ENCODE measurements at regions of chr2 and their contacts with region 1.

Region 1: DNA sequence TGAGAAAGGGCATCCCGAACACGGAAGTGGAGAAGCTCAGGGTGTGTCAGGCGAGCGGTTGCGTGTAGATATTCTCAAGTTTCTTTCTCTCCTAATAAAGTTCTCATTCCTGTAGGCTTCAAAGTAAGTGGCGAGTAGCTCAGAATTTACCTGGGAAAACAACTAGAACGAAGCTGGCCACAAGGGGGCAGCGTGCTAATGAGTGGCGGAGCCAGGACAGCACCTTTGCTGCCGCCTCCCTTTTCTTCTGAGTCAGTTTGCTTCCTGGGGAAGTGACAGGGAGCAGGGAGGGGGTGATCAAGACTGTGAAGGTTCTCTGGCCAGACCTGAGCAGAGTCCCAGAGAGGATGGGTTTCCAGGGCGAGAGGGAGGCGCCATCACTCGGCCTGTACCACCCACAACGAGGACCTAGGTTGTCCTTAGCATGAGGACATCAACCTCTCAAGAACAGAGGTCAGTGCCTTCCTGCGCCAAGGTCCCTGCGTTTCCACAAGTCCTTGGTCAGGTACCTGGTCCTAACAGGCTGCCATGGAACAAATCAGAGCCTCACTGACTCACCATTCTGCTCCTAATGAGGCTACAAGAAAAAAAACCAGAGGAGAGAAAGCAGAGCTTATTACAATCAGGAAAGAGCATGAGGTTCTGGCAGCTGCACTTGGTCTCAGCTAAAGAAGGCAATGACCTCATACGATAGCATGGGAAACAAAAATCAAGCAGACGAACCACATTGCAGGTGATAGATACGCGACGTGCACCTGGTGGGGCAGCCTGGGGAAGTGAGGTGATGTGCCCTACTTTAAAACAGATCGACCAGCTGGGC is 98.6 kb downstream of the PLB1 start:
- DNase-seq: peak; percentile 57 to 92 (median 81)
- ATAC-seq: peak; percentile 81 to 88 (median 84)
- H3K4me3 ChIP-seq: no peak overlapping the region
- H3K4me3 Mint-ChIP-seq: peak overlapping the region; percentile 53 to 73 (median 53)
- H3K27ac ChIP-seq: peak overlapping the region; percentile 76
- H3K27ac Mint-ChIP-seq: peak overlapping the region; percentile 89
- H3K4me1 ChIP-seq: peaks cover 4 to 10% of the 10 kb centered on the region in 2 experiments
- H3K4me1 Mint-ChIP-seq: peaks cover 17 to 20% (median 19%) of the 10 kb centered on the region in 3 donors
- H3K27me3 ChIP-seq: peaks cover 0 to 9% of the 10 kb centered on the region in 2 experiments
- H3K27me3 Mint-ChIP-seq: peaks cover 4 to 8% of the 10 kb centered on the region in 2 donors

Region 2: DNA sequence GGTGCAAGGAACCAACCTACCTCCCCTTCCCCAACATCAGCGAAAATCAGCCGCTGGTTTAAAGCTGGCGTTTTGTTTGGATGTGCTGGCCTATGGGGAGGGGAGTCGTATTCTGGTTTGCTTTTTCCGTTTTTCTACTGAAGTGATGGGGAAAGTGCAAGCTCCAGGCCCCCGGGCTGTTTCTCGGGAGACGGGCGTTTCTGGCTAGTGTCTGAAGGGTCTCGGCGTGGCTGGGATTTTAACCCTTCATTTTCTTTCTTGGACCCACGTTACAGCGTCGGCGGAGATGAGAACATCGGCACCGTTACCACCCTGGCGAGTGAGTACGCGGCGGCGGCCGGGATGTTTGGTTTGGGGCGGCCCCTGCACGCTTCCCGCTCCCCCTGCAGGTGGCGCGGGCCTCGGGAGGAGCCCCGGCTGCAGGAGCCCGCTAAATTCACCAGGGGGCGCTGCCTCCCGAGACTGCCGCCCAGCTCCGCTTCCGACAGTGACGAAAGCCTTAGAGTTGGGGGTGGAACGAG is 27.9 kb before region 1 on chr2:
- CTCF ChIA-PET with region 1: interaction called in 1 of 2 experiments, 12 read pairs
- POLR2A ChIA-PET with region 1: no interaction called
- DNase-seq: peak; percentile 70 to 95 (median 87)
- ATAC-seq: peak; percentile 95 to 99 (median 96)
- H3K4me3 ChIP-seq: peak overlapping the region; percentile 67 to 90
- H3K4me3 Mint-ChIP-seq: peak overlapping the region; percentile 86 to 89 (median 87)
- H3K27ac ChIP-seq: no peak overlapping the region
- H3K27ac Mint-ChIP-seq: peak overlapping the region; percentile 67 to 89
- H3K4me1 ChIP-seq: peaks cover 8 to 18% of the 10 kb centered on the region in 2 experiments
- H3K4me1 Mint-ChIP-seq: peaks cover 9 to 19% (median 16%) of the 10 kb centered on the region in 3 donors
- H3K27me3 ChIP-seq: peaks cover 0 to 3% of the 10 kb centered on the region in 2 experiments
- H3K27me3 Mint-ChIP-seq: no peaks in the 10 kb centered on the region

Region 3: DNA sequence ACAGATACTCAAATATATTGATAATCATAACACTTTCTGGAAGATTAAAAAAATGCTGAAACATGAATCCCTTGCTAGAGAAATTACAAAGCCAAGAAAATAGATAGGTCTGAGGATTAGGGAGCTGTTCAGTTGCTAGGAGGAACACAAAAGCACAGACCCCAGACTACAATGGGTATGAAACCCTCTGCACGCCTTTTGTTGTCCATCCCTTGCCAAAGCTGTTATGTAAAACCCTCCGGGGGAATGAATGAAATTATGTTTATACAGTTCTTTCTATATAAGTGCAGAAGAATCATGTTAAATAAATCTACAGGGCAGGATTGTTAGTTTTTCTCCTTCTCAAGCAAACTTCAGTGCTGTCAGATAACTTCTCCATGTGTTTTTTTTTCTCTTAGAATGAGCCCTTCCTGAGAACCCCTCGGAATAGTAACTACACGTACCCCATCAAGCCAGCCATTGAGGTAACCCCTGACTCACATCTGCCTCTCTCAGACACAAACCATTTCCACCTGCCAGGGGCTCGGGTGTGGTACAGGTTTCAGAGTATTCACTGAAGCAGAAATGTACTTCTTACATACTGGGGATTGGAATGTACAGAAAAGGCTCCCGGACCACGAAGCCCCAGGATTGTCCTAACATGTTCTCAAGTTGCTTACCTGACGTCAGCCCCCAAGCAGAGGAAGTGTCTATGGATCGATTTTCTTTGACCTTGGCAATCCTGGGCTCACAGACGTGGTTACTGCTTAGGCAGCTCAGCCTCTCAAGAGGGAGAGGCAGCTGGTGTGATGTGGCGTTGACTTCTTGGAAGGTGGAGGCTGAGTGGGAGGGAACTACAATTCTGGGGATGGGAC is 19.4 kb after region 1 on chr2:
- CTCF ChIA-PET with region 1: interaction called, 9 to 30 read pairs
- POLR2A ChIA-PET with region 1: interaction called, 6 to 14 read pairs
- DNase-seq: peak in 14 of 35 experiments; percentile 11 to 50 (median 23)
- ATAC-seq: peak; percentile 40 to 49 (median 46)
- H3K4me3 ChIP-seq: no peak overlapping the region
- H3K4me3 Mint-ChIP-seq: no peak overlapping the region
- H3K27ac ChIP-seq: peak overlapping the region; percentile 71
- H3K27ac Mint-ChIP-seq: no peak overlapping the region
- H3K4me1 ChIP-seq: peaks cover 53 to 54% of the 10 kb centered on the region in 2 experiments
- H3K4me1 Mint-ChIP-seq: peaks cover 28 to 47% (median 42%) of the 10 kb centered on the region in 3 donors
- H3K27me3 ChIP-seq: no peaks in the 10 kb centered on the region
- H3K27me3 Mint-ChIP-seq: no peaks in the 10 kb centered on the region

Region 4: DNA sequence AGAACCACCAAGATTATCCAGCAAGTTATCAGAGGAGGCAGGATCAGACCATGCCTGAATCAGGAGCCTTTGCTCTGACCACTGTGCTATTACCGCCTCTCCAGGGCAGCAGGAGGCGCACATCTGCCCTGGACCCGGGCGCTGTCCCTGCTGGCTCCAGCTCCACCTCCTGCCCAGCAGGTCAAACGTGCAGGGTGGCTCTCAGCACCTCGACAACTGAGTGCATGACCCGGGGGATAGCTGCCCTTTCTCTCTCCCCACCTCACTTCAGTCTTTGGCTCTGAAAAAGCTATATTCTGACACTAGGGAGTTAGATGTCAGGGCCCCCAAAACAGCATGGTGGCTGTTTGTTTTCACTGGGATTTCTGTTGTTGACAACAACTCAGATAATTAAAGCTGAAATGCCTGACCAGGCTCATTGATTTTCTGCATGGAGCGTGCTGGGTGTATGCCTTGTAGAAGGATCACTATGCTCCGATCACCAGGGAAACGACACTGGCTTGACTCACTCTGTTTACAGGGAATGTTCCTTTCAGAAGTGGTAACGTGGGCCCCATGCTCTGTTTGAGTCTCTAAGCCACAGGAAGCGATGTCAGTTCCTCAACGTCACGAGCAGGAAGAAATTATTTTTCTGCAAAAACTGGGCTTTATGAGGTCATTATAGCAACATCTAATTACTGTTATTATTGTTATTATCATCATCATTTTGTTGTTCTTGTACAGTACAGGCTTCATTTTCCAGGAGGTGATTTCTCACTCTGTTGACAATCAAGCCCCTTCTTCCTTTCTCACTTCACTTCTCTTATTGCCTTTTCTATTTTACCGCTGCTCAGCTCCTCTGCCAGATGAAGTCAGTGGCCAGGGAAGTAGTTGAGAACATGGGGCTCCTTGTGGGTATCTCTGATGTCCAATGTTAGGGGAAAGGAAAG is 26.9 kb after region 1 on chr2:
- CTCF ChIA-PET with region 1: interaction called, 9 to 62 read pairs
- POLR2A ChIA-PET with region 1: interaction called, 5 to 14 read pairs
- DNase-seq: peak; percentile 40 to 94 (median 82)
- ATAC-seq: peak; percentile 89 to 92 (median 91)
- H3K4me3 ChIP-seq: peak overlapping the region; percentile 22 to 32
- H3K4me3 Mint-ChIP-seq: peak overlapping the region; percentile 66 to 83 (median 72)
- H3K27ac ChIP-seq: peak overlapping the region; percentile 99
- H3K27ac Mint-ChIP-seq: peak overlapping the region; percentile 98 to 99
- H3K4me1 ChIP-seq: peaks cover 63 to 87% of the 10 kb centered on the region in 2 experiments
- H3K4me1 Mint-ChIP-seq: peaks cover 25 to 92% (median 89%) of the 10 kb centered on the region in 3 donors
- H3K27me3 ChIP-seq: no peaks in the 10 kb centered on the region
- H3K27me3 Mint-ChIP-seq: no peaks in the 10 kb centered on the region

Region 5: DNA sequence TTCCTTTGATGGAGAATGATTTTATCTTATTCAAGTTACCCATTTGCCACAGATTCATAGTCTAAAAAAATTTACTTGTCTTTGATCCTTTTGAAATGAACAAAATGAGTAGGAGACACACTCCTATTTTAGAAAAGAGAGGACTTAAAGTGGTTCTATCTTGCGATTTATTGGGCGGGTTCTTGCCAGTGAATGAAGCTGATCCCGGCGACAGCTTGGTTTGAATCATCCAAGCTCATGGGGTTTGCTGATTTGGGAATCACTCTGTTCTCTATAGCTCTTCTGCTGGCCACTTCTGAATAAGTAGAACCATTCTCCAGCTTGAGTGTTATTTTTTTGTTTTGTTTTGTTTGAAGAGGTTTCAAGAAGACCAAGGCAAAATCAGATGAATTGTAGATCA is 131.7 kb after region 1 on chr2:
- CTCF ChIA-PET with region 1: interaction called in 1 of 2 experiments, 12 read pairs
- POLR2A ChIA-PET with region 1: no interaction called
- DNase-seq: no peak
- ATAC-seq: no peak
- H3K4me3 ChIP-seq: no peak overlapping the region
- H3K4me3 Mint-ChIP-seq: no peak overlapping the region
- H3K27ac ChIP-seq: no peak overlapping the region
- H3K27ac Mint-ChIP-seq: no peak overlapping the region
- H3K4me1 ChIP-seq: no peaks in the 10 kb centered on the region
- H3K4me1 Mint-ChIP-seq: peaks cover 3 to 11% (median 10%) of the 10 kb centered on the region in 3 donors
- H3K27me3 ChIP-seq: no peaks in the 10 kb centered on the region
- H3K27me3 Mint-ChIP-seq: no peaks in the 10 kb centered on the region

Region 6: DNA sequence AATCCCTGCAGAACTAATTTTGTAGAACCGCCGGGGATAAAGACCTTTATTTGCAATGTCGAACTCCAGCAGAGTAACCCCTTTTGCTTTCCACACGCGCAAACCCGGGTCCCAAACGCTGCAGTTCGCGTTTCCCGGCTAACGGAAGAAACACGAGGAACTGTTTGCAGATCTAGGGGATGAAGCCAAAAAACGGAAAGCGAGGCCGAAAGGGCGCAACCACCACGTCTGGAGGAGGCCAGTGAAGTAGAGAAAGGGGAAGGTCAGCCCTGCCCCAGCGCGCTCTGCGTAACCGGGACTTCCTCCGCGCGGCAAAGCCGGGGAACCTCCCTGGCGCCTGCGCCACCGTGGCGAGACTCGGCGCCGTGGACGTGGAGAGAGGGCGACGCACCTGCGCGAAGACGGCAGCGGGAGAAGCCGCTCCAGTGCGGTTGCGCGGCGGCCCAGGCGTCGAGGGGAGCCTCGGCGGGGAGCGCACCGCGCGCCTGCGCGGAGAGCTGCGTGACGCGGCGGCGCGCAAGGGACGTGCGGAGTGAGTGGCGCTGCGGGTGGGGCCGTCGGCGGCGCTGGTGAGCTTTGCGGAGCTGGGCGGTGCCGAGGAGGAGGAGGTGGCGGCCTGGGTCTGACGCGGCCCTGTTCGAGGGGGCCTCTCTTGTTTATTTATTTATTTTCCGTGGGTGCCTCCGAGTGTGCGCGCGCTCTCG is 156.9 kb after region 1 on chr2 and contains the start of gene PPP1CB:
- CTCF ChIA-PET with region 1: interaction called, 4 to 45 read pairs
- POLR2A ChIA-PET with region 1: interaction called, 3 to 16 read pairs
- DNase-seq: peak; percentile 92 to 99 (median 97)
- ATAC-seq: peak; percentile 86 to 90 (median 88)
- H3K4me3 ChIP-seq: peak within 1 kb of the TSS; percentile 83 to 98
- H3K4me3 Mint-ChIP-seq: peak within 1 kb of the TSS; percentile 94 to 97 (median 95)
- H3K27ac ChIP-seq: peak within 1 kb of the TSS; percentile 97
- H3K27ac Mint-ChIP-seq: peak within 1 kb of the TSS; percentile 95 to 97
- H3K4me1 ChIP-seq: peaks cover 34 to 36% of the 10 kb centered on the region in 2 experiments
- H3K4me1 Mint-ChIP-seq: peaks cover 61 to 70% (median 65%) of the 10 kb centered on the region in 3 donors
- H3K27me3 ChIP-seq: no peaks in the 10 kb centered on the region
- H3K27me3 Mint-ChIP-seq: no peaks in the 10 kb centered on the region
- total RNA-seq, gene PPP1CB: 182 to 233 (median 190) TPM

Region 7: GRCh38 chr2:28761420-28761819 is 166.9 kb after region 1 on chr2:
- CTCF ChIA-PET with region 1: interaction called, 3 to 45 read pairs
- POLR2A ChIA-PET with region 1: interaction called in 1 of 2 experiments, 3 read pairs
- DNase-seq: no peak
- ATAC-seq: no peak
- H3K4me3 ChIP-seq: no peak overlapping the region
- H3K4me3 Mint-ChIP-seq: peak overlapping the region in 1 of 3 donors; percentile 39
- H3K27ac ChIP-seq: no peak overlapping the region
- H3K27ac Mint-ChIP-seq: no peak overlapping the region
- H3K4me1 ChIP-seq: peaks cover 11 to 40% of the 10 kb centered on the region in 2 experiments
- H3K4me1 Mint-ChIP-seq: peaks cover 88 to 92% (median 88%) of the 10 kb centered on the region in 3 donors
- H3K27me3 ChIP-seq: no peaks in the 10 kb centered on the region
- H3K27me3 Mint-ChIP-seq: no peaks in the 10 kb centered on the region